GM10248 (cell line): ENCODE measurements at regions of chr6 and their contacts with region 1.

Region 1: DNA sequence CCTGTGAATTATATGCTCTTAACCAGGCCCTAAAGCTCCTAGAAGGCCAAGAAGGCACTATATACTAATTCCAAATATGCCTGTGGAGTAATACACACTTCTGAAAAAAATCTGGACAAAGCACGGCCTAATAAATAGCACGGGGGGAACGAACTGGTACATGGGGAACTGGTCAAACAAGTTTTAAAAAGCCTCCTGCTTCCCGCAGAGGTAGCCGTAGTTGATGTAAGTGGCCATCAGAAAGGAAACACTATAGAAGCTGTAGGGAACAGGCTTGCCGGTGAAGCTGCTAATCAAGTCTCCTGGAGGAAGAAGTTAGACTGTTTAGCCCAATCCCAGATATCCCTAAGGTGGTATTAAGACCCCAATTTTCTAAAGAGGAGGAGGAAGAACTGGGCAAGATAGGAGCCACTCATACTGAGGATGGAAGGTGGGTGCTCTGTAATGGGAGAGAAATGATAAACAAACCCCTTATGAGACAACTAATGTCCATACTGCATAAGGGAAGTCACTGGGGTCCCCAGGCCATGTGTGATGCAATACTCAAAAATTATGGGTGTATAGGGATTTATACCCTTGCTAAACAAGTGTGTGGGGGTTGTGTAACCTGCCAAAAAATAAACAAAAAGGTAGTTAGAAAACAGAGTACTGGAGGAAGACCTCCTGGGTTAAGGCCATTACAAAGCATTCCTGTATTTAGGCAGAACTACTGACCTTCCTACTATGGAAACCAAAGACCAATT is 27.1 kb upstream of the ZNF318 start:
- DNase-seq: no peak
- CTCF ChIP-seq: no peak

Region 2: GRCh38 chr6:43221046-43221972 is 175.3 kb before region 1 on chr6:
- CTCF ChIA-PET with region 1: no interaction called
- POLR2A ChIA-PET with region 1: no interaction called
- DNase-seq: no peak
- CTCF ChIP-seq: no peak

Region 3: GRCh38 chr6:43413002-43413401 is 16.4 kb after region 1 on chr6:
- CTCF ChIA-PET with region 1: interaction called, 19 read pairs
- POLR2A ChIA-PET with region 1: no interaction called
- DNase-seq: no peak
- CTCF ChIP-seq: no peak